Common myeloid progenitor, CD34-positive (primary cell): ENCODE measurements at regions of chr18 and their contacts with region 1.

Region 1: DNA sequence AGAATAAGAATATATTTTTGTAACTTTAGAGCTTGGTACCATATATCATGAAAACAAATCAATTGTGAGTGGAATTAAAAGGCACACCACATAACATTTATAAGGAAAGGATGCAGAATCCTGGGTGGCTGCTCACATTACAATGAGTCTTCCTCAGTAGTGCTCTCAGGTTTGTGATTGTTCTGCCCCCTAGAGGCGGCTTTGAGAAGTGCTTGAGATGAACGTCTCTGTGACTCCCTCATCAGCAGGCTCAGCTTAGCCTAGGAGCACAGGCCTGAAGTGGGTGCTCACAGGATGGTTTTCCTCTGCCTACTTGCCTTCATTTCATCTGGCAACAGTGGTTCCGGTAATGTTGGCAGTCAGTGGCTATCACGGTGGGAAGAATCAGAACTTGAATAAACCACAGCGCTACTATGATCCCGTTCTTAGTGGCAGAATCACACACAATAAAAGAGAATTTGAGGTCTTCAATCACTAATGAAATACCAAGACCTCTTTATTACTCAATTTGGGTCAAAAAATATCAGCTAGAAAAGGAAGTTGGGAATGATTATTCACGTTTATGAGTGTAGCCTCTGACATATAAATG is 38.1 kb upstream of the B4GALT6 start:
- DNase-seq: peak; percentile 84 to 88 (median 86)
- H3K4me3 ChIP-seq: no peak overlapping the region
- H3K27ac ChIP-seq: no peak overlapping the region
- H3K4me1 ChIP-seq: peaks cover 0 to 24% (median 6%) of the 10 kb centered on the region in 4 experiments
- H3K27me3 ChIP-seq: no peaks in the 10 kb centered on the region

Region 2: DNA sequence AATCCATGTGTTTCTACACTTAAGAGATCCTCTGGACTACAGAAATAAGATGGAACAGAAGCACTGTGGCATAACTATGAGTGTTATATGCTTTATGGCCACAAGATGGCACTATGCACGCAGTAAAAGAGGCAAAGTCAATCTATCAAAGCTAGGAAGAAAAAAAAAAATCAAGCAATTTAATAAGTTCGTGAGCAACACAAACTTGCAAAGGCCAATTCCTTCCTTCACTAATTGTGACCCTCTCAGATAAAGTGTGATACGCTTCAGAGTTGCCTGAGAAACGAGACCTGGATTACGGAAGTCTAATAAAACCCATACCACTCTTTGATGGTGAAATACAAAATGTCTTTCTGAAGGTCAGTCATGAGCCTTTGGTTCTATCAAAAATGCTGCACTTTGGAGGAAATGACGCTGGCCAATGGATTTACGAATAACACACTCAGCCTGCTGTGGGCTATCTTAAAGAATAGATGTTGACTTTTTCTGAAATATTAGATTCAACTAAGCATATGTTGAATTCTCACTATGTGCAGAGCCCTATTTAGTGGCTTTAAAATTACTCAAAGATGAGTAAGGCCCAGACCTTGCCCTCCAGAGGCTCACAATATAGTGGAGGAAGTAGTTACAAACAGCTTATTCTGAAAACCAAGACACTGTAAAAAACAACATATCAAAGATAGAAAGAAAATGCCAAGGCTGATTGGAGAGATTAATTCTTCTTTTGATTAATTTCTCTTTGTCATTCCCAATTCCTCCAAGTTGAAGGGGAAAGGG is 166.3 kb before region 1 on chr18:
- CTCF ChIA-PET with region 1: interaction called, 38 read pairs
- POLR2A ChIA-PET with region 1: no interaction called
- DNase-seq: peak; percentile 79 to 88 (median 84)
- H3K4me3 ChIP-seq: peak overlapping the region in 1 of 7 experiments; percentile 42
- H3K27ac ChIP-seq: no peak overlapping the region
- H3K4me1 ChIP-seq: peaks cover 0 to 5% (median 3%) of the 10 kb centered on the region in 4 experiments
- H3K27me3 ChIP-seq: no peaks in the 10 kb centered on the region

Region 3: GRCh38 chr18:31563778-31564177 is 158.7 kb before region 1 on chr18:
- CTCF ChIA-PET with region 1: interaction called, 20 read pairs
- POLR2A ChIA-PET with region 1: no interaction called
- DNase-seq: no peak
- H3K4me3 ChIP-seq: no peak overlapping the region
- H3K27ac ChIP-seq: no peak overlapping the region
- H3K4me1 ChIP-seq: no peaks in the 10 kb centered on the region
- H3K27me3 ChIP-seq: no peaks in the 10 kb centered on the region

Region 4: DNA sequence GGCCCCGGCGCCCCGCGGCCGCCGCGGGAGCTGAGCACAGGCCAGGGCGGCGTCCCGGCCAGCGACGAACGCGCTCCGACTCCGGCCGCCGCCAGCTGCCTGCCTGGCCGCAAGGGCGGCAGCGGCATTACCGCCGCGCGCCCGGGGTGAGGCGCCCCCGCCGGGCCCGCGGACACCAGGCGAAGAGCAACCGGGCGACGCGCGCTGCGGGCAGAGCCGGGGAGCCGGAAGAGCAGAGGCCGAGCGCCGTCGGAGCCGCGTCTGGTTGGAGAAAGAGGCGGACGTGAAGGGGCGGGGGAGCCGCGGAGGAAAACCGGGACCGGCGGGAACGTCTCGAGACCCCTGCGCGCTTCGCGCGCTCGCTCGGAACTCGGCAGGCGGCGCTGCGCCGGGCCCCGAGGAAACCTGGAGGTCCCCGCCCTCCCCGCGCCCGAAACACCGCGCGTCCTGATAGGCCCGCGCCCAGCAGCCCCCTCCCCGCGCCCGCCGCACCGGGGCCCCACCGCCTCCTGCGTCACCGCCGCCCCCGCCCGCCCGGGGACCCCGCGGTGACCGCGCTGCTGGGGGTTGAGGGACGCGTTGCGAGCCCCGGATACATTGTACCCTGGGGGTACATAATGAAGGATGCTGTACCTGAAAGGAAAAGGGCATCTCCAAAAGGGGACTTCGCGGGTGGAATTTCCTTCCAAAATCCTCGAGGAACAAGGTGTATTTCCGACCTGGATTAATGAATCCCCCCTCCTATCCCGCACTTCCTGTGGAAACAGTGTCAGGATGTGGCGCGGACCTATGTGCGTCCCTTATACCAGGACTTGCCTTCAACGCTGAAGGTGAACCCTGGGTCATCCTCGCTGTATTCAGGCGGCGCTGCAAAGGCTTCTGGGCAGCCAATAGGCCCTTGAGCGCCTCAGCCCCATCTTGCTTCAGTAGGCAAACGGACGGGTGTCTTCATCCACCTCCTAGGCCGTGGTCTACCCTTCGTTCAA is 37.1 kb before region 1 on chr18:
- CTCF ChIA-PET with region 1: interaction called, 13 read pairs
- POLR2A ChIA-PET with region 1: no interaction called
- DNase-seq: peak; percentile 89 to 94 (median 91)
- H3K4me3 ChIP-seq: peak overlapping the region; percentile 70 to 94 (median 87)
- H3K27ac ChIP-seq: peak overlapping the region; percentile 83 to 89
- H3K4me1 ChIP-seq: peaks cover 28 to 74% (median 57%) of the 10 kb centered on the region in 4 experiments
- H3K27me3 ChIP-seq: no peaks in the 10 kb centered on the region

Region 5: GRCh38 chr18:31736630-31737029 is 14.2 kb after region 1 on chr18:
- CTCF ChIA-PET with region 1: interaction called, 10 read pairs
- POLR2A ChIA-PET with region 1: interaction called, 3 read pairs
- DNase-seq: no peak
- H3K4me3 ChIP-seq: no peak overlapping the region
- H3K27ac ChIP-seq: no peak overlapping the region
- H3K4me1 ChIP-seq: peaks cover 0 to 3% (median 0%) of the 10 kb centered on the region in 4 experiments
- H3K27me3 ChIP-seq: no peaks in the 10 kb centered on the region